Cardiac septum (tissue), 1 donor: ENCODE measurements at regions of chr4 and their contacts with region 1.

Region 1: GRCh38 chr4:105520817-105521790 is 31.3 kb upstream of the ARHGEF38 start:
- DNase-seq: no peak

Region 2: DNA sequence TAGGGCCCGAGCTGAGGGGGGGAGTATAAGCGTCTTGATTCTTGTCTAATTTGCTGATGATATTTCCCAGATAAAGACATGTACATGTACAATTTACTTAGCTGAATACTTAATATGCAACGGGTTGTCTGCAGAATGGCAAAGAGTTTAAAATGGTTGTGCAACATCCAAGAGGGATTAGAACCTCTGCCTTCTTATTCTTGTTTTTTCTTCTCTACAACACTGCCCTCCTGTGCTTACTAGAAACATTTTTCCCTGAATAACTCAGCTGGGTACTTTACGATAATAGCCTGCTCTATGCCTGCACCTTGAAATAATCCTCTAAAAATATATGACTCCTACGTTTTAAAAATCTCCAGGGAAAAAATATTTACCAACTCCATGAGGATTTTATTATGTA is 145.6 kb after region 1 on chr4:
- intact Hi-C with region 1: loop called (anchors 2 kb)
- DNase-seq: no peak